ENCODE measurements at regions of chr5 and their contacts with region 1.

Region 1: DNA sequence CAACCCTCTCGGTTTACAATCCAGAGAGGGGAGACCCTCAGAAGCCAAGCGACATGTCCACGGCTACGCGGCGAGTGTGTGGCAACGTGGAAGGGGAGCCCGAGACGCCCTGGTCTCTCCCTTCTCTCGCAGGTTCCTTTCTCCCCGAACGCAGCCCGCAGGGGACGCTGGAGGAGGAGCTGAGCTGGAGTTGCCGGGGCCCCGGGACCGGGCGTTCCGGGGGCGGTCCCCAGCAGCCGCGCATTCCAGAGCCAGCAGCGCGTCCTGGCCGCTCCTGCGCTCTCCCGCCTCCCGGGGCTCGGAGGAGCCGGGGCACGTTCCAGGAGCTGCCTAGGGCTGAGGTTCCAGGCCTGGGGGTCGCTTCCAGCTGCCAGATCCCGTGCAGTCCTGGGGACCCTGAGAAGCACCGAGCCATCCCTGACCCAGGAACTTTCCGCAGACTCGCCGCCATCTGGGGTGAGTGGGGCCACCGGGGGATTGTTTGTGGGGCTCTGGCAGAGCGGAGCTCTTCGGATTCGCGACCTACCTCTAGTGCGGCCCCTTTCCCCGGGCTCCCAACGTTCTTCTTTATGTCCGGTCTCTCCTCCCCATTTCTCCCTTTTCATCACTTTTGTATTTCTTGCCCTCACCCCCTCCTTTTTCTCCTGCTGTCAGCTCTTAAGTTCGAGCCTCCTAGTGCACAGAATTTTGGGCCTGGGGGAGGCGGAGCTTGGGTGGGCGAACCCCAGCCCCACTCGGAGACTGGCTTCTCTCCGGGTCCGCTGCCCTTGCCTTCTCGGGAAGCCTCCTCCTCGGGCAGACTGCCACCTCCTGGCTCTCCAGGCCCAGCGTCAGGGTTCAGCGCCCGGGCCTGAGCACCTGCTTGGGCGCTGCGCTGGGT is at the start of gene SMIM3:
- DNase-seq: no peak
- H3K4me3 ChIP-seq: peak within 1 kb of the TSS; percentile 90
- H3K27me3 ChIP-seq: no peaks in the 10 kb centered on the region
- CTCF ChIP-seq: peak; percentile 43
- polyA plus RNA-seq, gene SMIM3: 43.7 and 45.0 TPM in 2 replicates

Region 2: GRCh38 chr5:150473673-150474358 is 304.9 kb before region 1 on chr5:
- CTCF ChIA-PET with region 1: no interaction called
- POLR2A ChIA-PET with region 1: interaction called, 21 read pairs
- DNase-seq: no peak
- H3K4me3 ChIP-seq: no peak overlapping the region
- H3K27me3 ChIP-seq: no peaks in the 10 kb centered on the region
- CTCF ChIP-seq: peak; percentile 19; the same call in 1 of the 2 replicates

Region 3: DNA sequence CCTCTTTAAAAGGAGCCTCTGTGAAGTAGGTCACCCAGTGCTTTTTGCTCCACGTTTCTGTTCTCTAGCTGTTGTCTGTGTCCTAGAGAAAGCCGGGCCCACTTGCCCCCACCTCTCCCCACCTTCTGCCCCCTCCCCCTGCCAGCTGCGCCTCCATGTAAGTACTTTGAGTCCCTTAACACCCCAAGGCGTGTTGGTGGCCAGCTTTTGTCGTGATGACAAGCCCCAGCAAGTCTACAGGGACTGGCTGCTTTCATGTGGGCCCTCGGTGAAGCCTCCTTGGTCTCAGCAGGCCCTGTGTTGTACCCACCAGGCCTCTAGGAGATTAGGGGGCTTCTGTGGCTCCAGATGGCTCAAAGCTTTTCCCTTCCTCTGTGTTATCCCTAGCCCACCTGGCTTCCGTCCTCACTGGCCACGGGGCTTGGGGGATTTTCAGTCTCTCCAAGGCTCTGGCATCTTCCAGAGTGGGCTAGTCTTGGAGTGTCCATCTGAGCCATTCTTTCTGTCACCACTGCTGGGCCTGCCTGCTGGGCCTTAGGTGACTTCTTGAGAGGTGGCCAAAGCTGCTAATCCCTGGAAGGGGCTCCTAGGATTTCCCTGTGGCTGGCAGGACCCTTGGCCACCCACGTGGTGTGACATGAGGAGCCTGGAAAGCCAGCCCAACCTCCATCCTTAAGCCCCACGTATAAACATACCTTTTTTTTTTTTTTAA is 272.0 kb before region 1 on chr5:
- CTCF ChIA-PET with region 1: no interaction called
- POLR2A ChIA-PET with region 1: interaction called, 12 read pairs
- DNase-seq: no peak
- H3K4me3 ChIP-seq: no peak overlapping the region
- H3K27me3 ChIP-seq: no peaks in the 10 kb centered on the region
- CTCF ChIP-seq: no peak

Region 4: GRCh38 chr5:150738862-150739261 is 39.9 kb before region 1 on chr5:
- CTCF ChIA-PET with region 1: no interaction called
- POLR2A ChIA-PET with region 1: no interaction called
- DNase-seq: no peak
- H3K4me3 ChIP-seq: no peak overlapping the region
- H3K27me3 ChIP-seq: no peaks in the 10 kb centered on the region
- CTCF ChIP-seq: no peak

Region 5: GRCh38 chr5:150862070-150862469 is 83.3 kb after region 1 on chr5:
- CTCF ChIA-PET with region 1: no interaction called
- POLR2A ChIA-PET with region 1: no interaction called
- DNase-seq: no peak
- H3K4me3 ChIP-seq: no peak overlapping the region
- H3K27me3 ChIP-seq: no peaks in the 10 kb centered on the region
- CTCF ChIP-seq: no peak

Region 6: GRCh38 chr5:151080623-151081430 is 302.1 kb after region 1 on chr5 and contains the start of gene TNIP1:
- CTCF ChIA-PET with region 1: no interaction called
- POLR2A ChIA-PET with region 1: interaction called, 14 read pairs
- DNase-seq: no peak
- H3K4me3 ChIP-seq: peak within 1 kb of the TSS; percentile 92
- H3K27me3 ChIP-seq: no peaks in the 10 kb centered on the region
- CTCF ChIP-seq: no peak
- polyA plus RNA-seq, gene TNIP1: 54.5 and 80.8 TPM in 2 replicates

Measured in BJ (cell line).